ENCODE measurements at regions of chr12 and their contacts with region 1.

Region 1: GRCh38 chr12:64392221-64392620 is 1.7 kb upstream of the C12orf56 start:
- DNase-seq: no peak
- H3K4me3 ChIP-seq: no peak overlapping the region
- H3K27me3 ChIP-seq: no peaks in the 10 kb centered on the region
- CTCF ChIP-seq: peak; percentile 49; the same call in 1 of the 2 replicates

Region 2: DNA sequence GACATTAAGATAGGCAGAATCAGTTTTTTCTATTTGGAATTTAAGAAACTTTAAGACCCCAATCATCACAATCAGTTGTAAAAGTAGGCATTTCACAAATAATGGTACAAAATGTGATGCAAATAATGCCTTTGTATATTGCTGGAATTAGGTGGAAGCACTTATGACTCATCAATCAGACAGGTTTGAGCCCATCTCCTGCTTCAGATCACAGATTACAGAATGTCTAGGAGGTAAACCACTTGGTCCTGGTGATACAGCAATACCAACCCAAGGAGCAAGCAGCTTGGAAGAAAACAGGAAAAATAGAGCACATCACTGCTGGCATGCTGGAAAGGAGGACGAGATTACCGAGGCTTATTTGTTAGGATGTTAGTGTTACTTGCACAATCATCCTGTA is 59.3 kb before region 1 on chr12:
- CTCF ChIA-PET with region 1: no interaction called
- POLR2A ChIA-PET with region 1: no interaction called
- DNase-seq: no peak
- H3K4me3 ChIP-seq: no peak overlapping the region
- H3K27me3 ChIP-seq: peaks cover 2% of the 10 kb centered on the region; the same call in 1 of the 2 replicates
- CTCF ChIP-seq: no peak

Region 3: GRCh38 chr12:64403707-64404469 is 11.7 kb after region 1 on chr12 and contains the start of gene XPOT:
- CTCF ChIA-PET with region 1: no interaction called
- POLR2A ChIA-PET with region 1: interaction called, 10 read pairs
- DNase-seq: peak; percentile 87
- H3K4me3 ChIP-seq: peak within 1 kb of the TSS; percentile 88
- H3K27me3 ChIP-seq: no peaks in the 10 kb centered on the region
- CTCF ChIP-seq: no peak
- polyA plus RNA-seq, gene XPOT: 77.4 and 188 TPM in 2 replicates